Astrocyte of the cerebellum (primary cell): ENCODE measurements at regions of chr3 and their contacts with region 1.

Region 1: DNA sequence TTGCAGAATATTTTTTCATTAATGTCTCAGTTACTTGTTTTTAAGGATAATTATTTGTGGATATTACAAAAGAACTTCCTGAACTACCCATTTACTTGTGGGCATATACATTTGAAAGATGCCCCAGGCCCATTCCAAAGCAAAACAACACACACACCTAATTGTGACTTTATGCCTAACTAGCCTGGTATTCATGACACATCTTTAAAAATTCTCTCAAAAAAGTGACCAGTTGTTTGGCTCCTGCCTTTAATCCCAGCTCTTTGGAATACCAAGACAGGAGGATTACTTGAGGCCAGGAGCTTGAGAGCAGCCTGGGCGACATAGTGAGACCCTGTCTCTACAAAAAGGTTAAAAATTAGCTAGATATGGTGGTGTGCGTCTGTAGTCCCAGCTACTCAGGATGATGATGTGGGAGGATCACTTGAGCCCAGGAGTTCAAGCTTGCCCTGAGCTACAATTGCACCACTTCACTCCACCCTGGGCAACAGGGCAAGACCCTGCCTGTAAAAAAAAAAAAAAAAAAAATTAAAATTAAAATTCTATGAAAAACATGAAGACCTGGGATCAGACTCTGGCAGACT is 51.7 kb upstream of the SLC4A7 start:
- DNase-seq: no peak
- H3K4me3 ChIP-seq: no peak overlapping the region
- CTCF ChIP-seq: no peak

Region 2: DNA sequence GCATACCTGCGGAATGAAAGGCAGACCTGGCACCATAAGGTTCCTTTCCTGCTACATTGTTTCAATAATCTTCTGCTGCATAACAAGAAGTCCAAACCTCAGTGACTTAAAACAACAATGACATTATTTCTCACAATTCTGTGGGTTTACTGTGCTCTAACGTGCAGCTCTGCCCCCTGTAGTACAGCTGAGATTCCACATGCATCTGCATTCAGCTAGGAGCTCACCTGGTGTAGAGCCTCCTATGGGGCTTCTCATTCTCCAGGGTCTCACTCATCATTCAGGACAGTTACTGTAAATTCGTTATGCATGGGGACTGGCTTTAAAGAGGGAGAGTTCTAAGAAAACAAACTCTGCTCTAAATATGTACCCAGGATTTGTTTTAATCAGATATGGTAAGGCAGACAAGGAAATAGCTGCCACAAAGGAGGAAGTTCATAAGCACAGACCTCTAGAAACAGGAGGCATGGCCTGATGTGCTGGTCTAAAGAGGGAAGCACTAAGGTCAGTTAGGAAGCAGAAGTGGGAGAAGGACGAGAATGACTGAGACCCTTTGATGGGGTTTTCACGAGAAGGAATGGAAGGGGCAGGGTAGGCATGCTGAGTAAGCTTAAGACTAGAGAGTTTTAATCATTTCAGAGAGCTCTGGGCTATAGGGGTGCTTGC is 513.7 kb before region 1 on chr3:
- in situ Hi-C with region 1: no loop called
- DNase-seq: no peak
- H3K4me3 ChIP-seq: no peak overlapping the region
- CTCF ChIP-seq: no peak

Region 3: GRCh38 chr3:27479806-27480543 is 55.9 kb before region 1 on chr3:
- in situ Hi-C with region 1: no loop called
- DNase-seq: no peak
- H3K4me3 ChIP-seq: no peak overlapping the region
- CTCF ChIP-seq: no peak

Region 4: DNA sequence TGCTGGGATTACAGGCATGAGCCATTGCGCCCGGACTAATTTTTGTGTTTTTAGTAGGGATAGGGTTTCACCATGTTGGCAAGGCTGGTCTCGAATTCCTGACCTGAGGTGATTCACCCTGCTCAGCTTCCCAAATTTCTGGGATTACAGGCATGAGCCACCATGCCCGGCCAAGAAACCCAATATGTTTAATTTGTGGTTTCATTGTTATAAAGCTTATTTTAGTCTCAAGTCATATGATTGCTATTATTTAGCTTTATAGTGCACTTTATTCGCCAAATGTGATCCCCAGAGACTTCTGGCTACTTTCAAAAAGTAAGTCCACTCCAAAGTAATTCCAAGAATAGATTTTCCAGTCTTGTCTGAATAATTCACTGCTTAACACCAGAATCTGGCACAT is 32.4 kb before region 1 on chr3:
- in situ Hi-C with region 1: loop called (anchors 5 kb)
- DNase-seq: peak; percentile 92
- H3K4me3 ChIP-seq: no peak overlapping the region
- CTCF ChIP-seq: no peak

Region 5: DNA sequence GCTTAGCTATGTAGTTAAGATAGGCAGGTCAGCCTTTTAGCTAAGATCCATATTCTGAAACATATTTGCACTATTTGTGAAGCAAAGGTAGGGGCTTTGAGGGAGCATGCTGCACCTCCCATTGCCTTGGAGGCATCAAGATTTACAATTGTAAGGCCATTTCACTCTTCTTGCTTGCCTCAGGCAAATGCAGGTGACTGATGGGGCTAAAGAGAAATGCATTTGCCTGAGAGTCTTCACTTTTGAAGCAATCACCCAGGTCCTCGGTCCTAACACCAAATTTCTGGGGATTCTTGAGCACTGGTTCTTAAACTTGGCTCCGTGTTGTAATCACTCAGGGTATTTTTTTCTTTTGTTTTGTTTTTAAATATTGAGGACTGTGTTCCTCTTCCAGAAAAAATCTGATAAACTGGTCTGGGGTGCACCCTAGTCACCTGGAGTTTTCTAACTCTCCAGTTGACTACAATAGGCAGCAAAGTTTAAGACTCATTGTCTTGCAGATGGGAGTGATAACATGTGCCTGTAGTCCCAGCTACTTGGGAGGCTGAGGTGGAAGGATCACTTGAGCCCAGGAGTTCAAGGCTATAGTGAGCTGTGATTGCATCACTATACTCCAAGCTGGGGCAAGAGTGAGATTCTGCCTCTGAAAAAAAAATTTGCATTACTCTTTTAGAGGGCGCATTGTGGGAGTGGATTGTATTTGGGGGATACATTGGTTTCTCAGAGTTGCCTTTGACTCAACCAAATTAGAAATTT is 118.1 kb after region 1 on chr3:
- in situ Hi-C with region 1: loop called (anchors 5 kb)
- DNase-seq: no peak
- H3K4me3 ChIP-seq: no peak overlapping the region
- CTCF ChIP-seq: no peak